ENCODE measurements at regions of chr6 and their contacts with region 1.

Region 1: GRCh38 chr6:16332175-16332542 is 93.8 kb downstream of the GMPR start:
- DNase-seq: peak; percentile 53 to 81 (median 70)
- ATAC-seq: peak; percentile 88 to 97 (median 95)
- H3K4me3 ChIP-seq: no peak overlapping the region
- H3K27ac ChIP-seq: no peak overlapping the region
- H3K4me1 ChIP-seq: peaks cover 0 to 3% (median 0%) of the 10 kb centered on the region in 3 donors
- H3K27me3 ChIP-seq: no peaks in the 10 kb centered on the region
- CTCF ChIP-seq: peak; percentile 70 to 88 (median 84)

Region 2: GRCh38 chr6:15561447-15562199 is 770.5 kb before region 1 on chr6:
- intact Hi-C with region 1: no loop called
- DNase-seq: no peak
- ATAC-seq: no peak
- H3K4me3 ChIP-seq: no peak overlapping the region
- H3K27ac ChIP-seq: no peak overlapping the region
- H3K4me1 ChIP-seq: no peaks in the 10 kb centered on the region
- H3K27me3 ChIP-seq: no peaks in the 10 kb centered on the region
- CTCF ChIP-seq: no peak

Region 3: DNA sequence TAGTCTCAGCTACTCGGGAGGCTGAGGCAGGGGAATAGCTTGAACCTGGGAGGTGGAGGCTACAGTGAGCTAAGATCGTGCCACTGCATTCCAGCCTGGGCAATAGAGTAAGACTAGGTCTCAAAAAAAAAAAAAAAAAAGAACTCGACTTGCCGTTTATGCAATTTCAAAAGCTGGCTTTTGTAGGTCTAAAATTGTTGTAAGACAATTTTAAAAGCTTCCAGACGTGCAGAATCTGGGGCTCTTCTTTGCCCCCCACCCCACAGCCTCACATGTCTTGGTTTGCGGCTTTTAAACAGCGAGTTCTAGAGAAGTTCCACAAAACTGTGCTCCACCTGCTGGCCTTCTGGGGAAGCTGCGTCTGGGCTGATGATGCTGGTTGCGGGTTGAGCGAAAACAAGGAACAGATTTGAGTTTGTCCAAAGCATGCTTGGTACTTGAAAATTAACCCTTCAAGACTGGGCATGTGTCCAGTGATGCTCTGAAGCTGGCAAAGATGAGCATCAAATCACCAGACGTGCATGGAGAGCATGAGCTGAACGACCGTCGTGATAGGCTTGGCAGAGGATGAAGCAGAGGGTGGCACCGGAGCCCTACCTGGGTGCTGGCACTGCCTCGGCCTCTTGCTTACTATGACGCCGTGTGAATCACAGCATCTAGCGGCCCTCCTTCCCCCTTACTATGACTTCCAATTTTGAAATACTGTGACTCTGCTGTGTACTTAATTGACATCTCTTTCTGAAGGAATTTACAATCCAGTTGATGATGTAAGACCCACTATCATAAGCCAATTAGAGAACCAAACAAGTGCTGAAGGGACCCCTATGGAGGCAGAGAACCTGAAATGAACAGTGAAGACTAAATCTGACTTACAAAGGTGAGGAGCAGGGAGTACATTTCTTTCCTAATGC is 77.6 kb after region 1 on chr6:
- intact Hi-C with region 1: loop called in 1 of 3 experiments (anchors 10 kb)
- DNase-seq: peak in 4 of 6 donors; percentile 7 to 60 (median 34)
- ATAC-seq: peak in 3 of 4 donors; percentile 74 to 77 (median 75)
- H3K4me3 ChIP-seq: no peak overlapping the region
- H3K27ac ChIP-seq: no peak overlapping the region
- H3K4me1 ChIP-seq: peaks cover 0 to 8% (median 0%) of the 10 kb centered on the region in 3 donors
- H3K27me3 ChIP-seq: no peaks in the 10 kb centered on the region
- CTCF ChIP-seq: peak; percentile 27 to 45 (median 32)

Region 4: GRCh38 chr6:16503970-16504415 is 171.8 kb after region 1 on chr6:
- intact Hi-C with region 1: loop called in 1 of 3 experiments (anchors 10 kb)
- DNase-seq: no peak
- ATAC-seq: no peak
- H3K4me3 ChIP-seq: no peak overlapping the region
- H3K27ac ChIP-seq: no peak overlapping the region
- H3K4me1 ChIP-seq: no peaks in the 10 kb centered on the region
- H3K27me3 ChIP-seq: no peaks in the 10 kb centered on the region
- CTCF ChIP-seq: no peak

Measured in pancreas (tissue), 10 donors.